ENCODE measurements at regions of chr15 and their contacts with region 1.

Region 1: DNA sequence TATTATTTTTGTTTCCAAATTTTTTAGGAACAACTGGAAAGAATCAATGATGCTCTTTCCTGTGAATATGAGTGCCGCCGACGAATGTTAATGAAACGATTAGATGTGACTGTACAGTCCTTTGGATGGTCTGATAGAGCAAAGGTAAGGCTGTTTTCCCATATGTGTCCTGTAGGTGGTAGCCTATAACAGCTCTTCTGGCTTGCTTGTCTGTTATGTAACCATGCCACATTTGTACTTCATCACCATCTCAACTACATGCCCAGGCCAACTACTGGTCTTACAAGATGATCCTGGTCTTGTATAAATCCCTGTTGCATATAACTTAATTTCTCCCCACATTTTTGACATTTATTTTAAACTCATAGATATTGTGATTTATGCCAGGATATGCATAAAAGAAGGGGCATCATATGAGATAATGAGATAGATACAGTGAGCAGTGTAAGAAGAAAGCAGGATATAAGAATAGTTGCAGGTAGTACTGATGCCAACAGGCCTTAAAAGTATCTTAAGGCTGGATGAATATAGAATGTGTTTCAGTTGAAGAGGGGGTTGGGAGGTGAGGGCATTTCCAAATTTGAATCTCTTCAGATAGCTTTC is 20.3 kb downstream of the FAM98B start:
- DNase-seq: no peak
- ATAC-seq: peak; percentile 61 to 96 (median 88)
- H3K4me3 ChIP-seq: no peak overlapping the region
- H3K27ac ChIP-seq: no peak overlapping the region
- H3K4me1 ChIP-seq: peaks cover 0 to 4% (median 0%) of the 10 kb centered on the region in 12 donors
- H3K27me3 ChIP-seq: no peaks in the 10 kb centered on the region
- CTCF ChIP-seq: peak; percentile 30 to 70 (median 60)
- POLR2A ChIP-seq: no peak

Region 2: GRCh38 chr15:38389924-38390542 is 84.2 kb before region 1 on chr15:
- intact Hi-C with region 1: no loop called
- DNase-seq: peak in 4 of 5 donors; percentile 36 to 64 (median 54)
- ATAC-seq: peak in 2 of 4 donors; percentile 56 to 63
- H3K4me3 ChIP-seq: no peak overlapping the region
- H3K27ac ChIP-seq: no peak overlapping the region
- H3K4me1 ChIP-seq: no peaks in the 10 kb centered on the region
- H3K27me3 ChIP-seq: no peaks in the 10 kb centered on the region
- CTCF ChIP-seq: peak; percentile 66 to 88 (median 77)
- POLR2A ChIP-seq: no peak

Region 3: DNA sequence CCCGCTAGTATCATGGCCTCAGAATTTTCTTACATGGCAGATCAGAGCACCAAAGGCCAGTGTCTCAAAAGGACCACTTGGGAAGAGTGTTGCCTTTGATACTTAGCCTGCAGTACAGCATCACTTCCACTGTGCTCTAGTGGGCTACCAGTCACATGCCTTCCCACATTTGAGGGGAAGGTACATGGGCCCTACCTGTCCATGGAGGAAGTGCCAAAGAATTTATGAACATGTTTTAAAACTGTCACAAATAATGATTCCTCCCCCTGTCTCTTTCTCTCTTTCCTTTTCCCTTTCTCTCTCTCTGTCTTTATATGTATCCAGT is 43.9 kb before region 1 on chr15:
- intact Hi-C with region 1: no loop called
- DNase-seq: no peak
- ATAC-seq: no peak
- H3K4me3 ChIP-seq: no peak overlapping the region
- H3K27ac ChIP-seq: no peak overlapping the region
- H3K4me1 ChIP-seq: no peaks in the 10 kb centered on the region
- H3K27me3 ChIP-seq: peaks cover 0 to 2% (median 0%) of the 10 kb centered on the region in 9 donors
- CTCF ChIP-seq: no peak
- POLR2A ChIP-seq: no peak

Region 4: DNA sequence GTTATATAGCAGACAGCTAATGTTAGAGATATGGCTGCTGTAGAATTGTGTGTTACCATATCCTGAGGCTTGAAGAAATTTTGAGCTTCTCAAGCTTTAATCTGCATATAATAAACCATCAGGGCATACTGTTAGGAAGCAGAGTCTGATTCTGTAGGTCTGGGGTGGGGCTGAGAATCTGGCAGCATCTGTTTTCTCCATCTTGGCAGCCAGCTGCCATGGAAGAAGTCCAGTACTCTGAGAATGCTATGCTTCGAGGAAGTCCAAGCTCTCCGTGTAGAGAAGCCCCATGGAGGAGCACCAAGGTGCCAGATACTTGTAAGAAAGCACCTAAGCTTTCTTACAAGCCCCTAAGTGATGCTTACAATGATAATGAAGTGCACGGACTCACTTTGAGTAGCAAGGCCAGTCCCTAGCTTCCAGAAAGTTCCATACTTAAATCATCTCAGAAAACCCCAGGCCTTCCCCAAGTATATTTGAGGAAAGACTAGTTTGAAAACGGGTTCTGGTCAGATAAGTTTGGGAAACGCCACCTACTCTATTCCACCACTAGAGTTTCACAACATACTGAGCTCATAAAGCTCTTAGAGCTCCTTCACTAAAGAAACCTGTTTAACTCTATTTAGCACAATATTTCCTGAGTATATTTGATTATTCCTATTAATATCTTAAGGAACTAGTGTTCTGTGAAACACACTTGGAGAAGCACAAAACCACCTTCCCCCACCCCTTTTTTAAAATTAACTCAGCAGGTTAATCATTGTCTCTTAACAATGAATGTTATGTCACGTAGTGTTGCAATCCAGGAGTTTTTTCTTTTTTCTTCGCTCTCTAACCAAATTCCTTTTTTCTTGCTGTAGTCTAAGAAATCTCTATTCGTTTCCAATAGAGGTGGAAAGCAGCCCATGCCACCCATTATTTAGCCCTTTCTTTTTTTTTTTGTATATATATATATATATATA is 150.3 kb after region 1 on chr15:
- intact Hi-C with region 1: loop called in 1 of 10 experiments (anchors 2 kb)
- DNase-seq: no peak
- ATAC-seq: peak in 2 of 4 donors; percentile 23 to 61
- H3K4me3 ChIP-seq: no peak overlapping the region
- H3K27ac ChIP-seq: peak overlapping the region in 3 of 12 donors; percentile 9 to 50 (median 32)
- H3K4me1 ChIP-seq: peaks cover 0 to 27% (median 10%) of the 10 kb centered on the region in 12 donors
- H3K27me3 ChIP-seq: no peaks in the 10 kb centered on the region
- CTCF ChIP-seq: no peak
- POLR2A ChIP-seq: no peak

Region 5: DNA sequence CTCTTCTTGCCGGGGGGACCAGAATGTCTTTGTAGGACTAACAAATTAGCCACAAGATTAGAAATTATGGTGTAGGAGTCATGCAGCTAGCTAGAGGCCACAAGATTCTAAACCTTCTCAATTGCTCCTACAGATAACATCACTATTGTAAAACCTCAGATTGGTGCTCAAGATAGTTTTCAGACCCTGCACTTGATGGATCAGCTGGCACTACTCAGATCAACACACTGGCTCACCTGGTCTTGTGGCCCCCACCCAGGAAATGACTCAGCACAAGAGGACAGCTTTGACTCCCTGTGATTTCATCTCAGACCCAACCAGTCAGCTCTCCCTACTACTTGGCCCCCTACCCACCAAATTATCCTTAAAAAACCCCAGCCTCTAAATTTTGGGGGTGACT is 214.5 kb after region 1 on chr15:
- intact Hi-C with region 1: loop called in 9 of 10 experiments (anchors 5 to 10 kb)
- DNase-seq: no peak
- ATAC-seq: no peak
- H3K4me3 ChIP-seq: no peak overlapping the region
- H3K27ac ChIP-seq: peak overlapping the region in 1 of 12 donors; percentile 54
- H3K4me1 ChIP-seq: peaks cover 0 to 40% (median 0%) of the 10 kb centered on the region in 12 donors
- H3K27me3 ChIP-seq: no peaks in the 10 kb centered on the region
- CTCF ChIP-seq: no peak
- POLR2A ChIP-seq: no peak